ENCODE measurements at regions of chr11 and their contacts with region 1.

Region 1: GRCh38 chr11:35822815-35823495 is 120.9 kb upstream of the LDLRAD3 start:
- DNase-seq: no peak
- ATAC-seq: no peak

Region 2: DNA sequence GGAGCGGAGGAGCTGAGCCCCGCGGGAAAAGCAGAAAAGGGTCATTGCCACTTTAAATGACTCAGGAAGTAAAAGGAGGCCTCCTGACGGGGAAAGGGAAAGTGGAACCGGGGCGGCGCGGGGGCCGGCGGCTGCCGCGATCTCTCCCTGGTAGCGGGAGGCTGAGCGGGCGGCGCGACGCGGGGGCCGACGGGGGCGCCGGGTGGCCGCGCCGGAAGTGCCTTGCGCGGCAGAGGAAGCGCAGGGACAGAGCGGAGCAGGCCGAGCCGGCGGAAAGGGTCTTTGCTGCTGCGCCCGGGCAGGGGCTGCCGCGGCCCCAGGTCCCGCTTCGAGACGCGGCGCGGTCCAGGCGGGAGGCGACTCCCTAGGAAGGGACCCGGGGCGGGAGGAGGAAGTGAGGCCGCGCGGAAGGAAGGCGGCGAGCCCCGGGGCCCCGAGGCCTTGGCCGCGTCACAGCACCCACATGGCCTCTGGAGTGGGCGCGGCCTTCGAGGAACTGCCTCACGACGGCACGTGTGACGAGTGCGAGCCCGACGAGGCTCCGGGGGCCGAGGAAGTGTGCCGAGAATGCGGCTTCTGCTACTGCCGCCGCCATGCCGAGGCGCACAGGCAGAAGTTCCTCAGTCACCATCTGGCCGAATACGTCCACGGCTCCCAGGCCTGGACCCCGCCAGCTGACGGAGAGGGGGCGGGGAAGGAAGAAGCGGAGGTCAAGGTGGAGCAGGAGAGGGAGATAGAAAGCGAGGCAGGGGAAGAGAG is 160.1 kb before region 1 on chr11 and contains the start of gene TRIM44:
- intact Hi-C with region 1: loop called (anchors 5 kb)
- DNase-seq: peak; percentile 90
- ATAC-seq: peak; percentile 96
- total RNA-seq, gene TRIM44: 39.9 TPM

Region 3: GRCh38 chr11:35780951-35781860 is 41.7 kb before region 1 on chr11:
- intact Hi-C with region 1: no loop called
- DNase-seq: no peak
- ATAC-seq: no peak

Region 4: DNA sequence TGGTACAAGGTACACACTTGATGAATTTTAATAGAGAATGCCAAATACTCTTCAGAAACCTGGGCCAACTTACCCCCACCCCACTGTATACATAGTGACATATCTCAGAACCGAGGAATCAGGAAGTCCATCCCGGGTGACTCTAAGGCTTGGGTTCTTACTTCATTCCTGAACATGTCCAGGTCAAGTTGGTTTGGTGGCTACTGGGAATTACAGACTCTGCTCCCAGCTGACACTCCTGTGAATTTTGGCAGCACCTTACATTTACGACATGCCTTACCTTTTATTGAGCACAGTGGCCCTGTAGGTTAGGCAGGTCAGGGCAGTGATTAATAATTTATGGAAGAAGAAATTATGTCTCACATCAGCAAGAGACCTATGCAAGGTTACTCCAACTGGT is 50.8 kb after region 1 on chr11:
- intact Hi-C with region 1: no loop called
- DNase-seq: no peak
- ATAC-seq: no peak

Region 5: GRCh38 chr11:36131721-36132397 is 308.9 kb after region 1 on chr11:
- intact Hi-C with region 1: loop called (anchors 2 kb)
- DNase-seq: peak; percentile 71
- ATAC-seq: peak; percentile 71

Region 6: GRCh38 chr11:36265793-36266628 is 443.1 kb after region 1 on chr11:
- intact Hi-C with region 1: loop called (anchors 5 kb)
- DNase-seq: no peak
- ATAC-seq: peak; percentile 65